ENCODE measurements at regions of chr10 and their contacts with region 1.

Region 1: DNA sequence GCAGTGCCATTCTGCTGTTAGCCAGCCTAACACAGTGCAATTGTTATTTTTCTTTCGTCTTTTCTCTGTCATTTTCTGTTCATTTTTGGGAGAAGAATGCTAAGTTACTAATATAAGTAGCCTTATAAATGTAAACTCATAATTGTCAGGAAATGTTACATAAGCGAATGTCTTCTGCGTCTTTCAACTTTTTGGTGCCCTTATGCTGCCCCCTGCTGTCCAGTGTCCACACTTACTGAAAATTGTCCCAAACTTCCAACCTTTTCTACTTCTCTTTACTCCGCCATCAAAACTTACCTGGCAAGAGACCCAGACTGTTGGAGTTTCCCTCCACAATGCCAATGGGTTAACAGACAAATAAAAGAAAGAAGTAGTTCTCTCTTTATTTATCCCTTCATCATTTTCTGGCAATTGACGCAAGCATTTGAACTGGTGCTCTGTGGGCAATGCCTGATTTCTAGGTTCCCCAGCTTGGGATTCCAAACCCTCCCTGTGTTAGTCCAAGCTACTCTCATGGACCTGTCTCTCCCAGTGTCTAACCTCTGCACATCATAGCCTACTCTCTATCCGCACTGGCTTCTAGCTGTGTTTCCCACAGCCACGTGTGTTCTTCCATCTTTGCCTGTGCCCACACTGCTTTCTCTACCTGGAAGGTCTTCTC is 21.0 kb upstream of the EPC1 start:
- DNase-seq: peak; percentile 51
- H3K4me3 ChIP-seq: no peak overlapping the region
- H3K27ac ChIP-seq: peak overlapping the region; percentile 8
- H3K4me1 ChIP-seq: no peaks in the 10 kb centered on the region
- H3K27me3 ChIP-seq: no peaks in the 10 kb centered on the region
- CTCF ChIP-seq: peak; percentile 73 to 76

Region 2: DNA sequence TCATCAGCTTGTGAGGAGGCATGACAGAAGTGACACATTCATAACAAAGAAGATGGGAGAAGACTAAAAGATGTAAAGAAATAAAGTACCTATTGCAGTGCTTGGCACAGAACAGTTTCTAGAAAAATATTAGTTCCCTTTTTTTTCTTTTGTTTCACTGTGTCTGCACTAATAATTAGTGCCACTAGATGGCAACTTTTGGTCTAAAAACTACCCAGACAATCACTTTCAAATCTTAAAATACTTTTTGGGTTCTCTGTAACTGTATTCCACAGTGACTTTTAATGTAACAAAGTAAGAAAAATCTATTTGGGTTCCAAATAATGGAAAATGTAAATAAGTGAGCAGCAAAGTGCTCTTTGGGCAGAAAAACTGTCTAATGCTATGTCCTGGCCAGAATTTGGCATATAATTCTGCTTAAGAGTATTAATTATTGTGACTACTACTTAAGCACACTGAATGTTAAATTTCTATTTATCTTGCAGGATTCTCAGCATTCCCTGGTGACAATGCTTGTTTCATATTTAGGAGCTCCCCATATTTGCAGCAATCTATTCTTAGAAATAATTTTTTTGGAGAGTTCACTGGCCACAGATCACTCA is 176.9 kb before region 1 on chr10:
- CTCF ChIA-PET with region 1: no interaction called
- dilution Hi-C with region 1: no loop called
- in situ Hi-C with region 1: no loop called
- intact Hi-C with region 1: loop called (anchors 1 kb)
- DNase-seq: peak; percentile 27
- H3K4me3 ChIP-seq: no peak overlapping the region
- H3K27ac ChIP-seq: no peak overlapping the region
- H3K4me1 ChIP-seq: no peaks in the 10 kb centered on the region
- H3K27me3 ChIP-seq: no peaks in the 10 kb centered on the region
- CTCF ChIP-seq: peak; percentile 65 to 66

Region 3: GRCh38 chr10:32256613-32257437 is 111.1 kb before region 1 on chr10:
- CTCF ChIA-PET with region 1: no interaction called
- dilution Hi-C with region 1: no loop called
- in situ Hi-C with region 1: no loop called
- intact Hi-C with region 1: loop called (anchors 1 kb)
- DNase-seq: peak; percentile 46
- H3K4me3 ChIP-seq: no peak overlapping the region
- H3K27ac ChIP-seq: no peak overlapping the region
- H3K4me1 ChIP-seq: peaks cover 13% of the 10 kb centered on the region
- H3K27me3 ChIP-seq: no peaks in the 10 kb centered on the region
- CTCF ChIP-seq: peak; percentile 94 to 98

Region 4: DNA sequence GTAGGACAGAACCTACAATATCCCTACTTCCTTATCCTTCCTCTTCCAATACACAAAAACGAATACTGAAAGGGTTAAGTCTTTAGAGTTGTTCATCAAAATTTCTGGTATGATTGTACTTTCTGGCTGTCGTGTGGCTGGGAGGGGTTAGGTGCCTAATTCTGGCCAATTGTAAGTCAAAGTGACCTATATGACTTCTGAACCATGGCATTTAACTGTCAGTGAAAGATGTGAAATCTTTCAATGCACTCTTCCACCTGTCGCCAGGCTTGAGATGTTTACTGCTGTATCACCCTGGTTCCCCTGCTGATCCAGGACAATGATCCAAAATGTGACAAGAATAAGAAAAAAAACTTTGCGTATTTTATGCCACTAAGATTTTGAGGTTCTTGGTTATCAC is 41.8 kb before region 1 on chr10:
- CTCF ChIA-PET with region 1: no interaction called
- dilution Hi-C with region 1: no loop called
- in situ Hi-C with region 1: no loop called
- intact Hi-C with region 1: no loop called
- DNase-seq: no peak
- H3K4me3 ChIP-seq: no peak overlapping the region
- H3K27ac ChIP-seq: no peak overlapping the region
- H3K4me1 ChIP-seq: peaks cover 4% of the 10 kb centered on the region
- H3K27me3 ChIP-seq: no peaks in the 10 kb centered on the region
- CTCF ChIP-seq: no peak

Measured in mammary epithelial cell (primary cell).